Gastrocnemius medialis (tissue), 4 donors: ENCODE measurements at regions of chr12 and their contacts with region 1.

Region 1: GRCh38 chr12:3872800-3873636 is at the start of gene PARP11:
- DNase-seq: peak; percentile 95 to 96
- ATAC-seq: peak; percentile 99
- H3K4me3 ChIP-seq: peak within 1 kb of the TSS; percentile 58 to 79 (median 72)
- H3K27ac ChIP-seq: peak within 1 kb of the TSS; percentile 87 to 95 (median 92)
- H3K4me1 ChIP-seq: peaks cover 9 to 21% of the 10 kb centered on the region in 2 donors
- H3K27me3 ChIP-seq: peaks cover 0 to 5% (median 0%) of the 10 kb centered on the region in 3 donors
- CTCF ChIP-seq: no peak
- POLR2A ChIP-seq: peak; percentile 34 to 43
- total RNA-seq, gene PARP11: 0.53 to 2.4 (median 1.2) TPM

Region 2: DNA sequence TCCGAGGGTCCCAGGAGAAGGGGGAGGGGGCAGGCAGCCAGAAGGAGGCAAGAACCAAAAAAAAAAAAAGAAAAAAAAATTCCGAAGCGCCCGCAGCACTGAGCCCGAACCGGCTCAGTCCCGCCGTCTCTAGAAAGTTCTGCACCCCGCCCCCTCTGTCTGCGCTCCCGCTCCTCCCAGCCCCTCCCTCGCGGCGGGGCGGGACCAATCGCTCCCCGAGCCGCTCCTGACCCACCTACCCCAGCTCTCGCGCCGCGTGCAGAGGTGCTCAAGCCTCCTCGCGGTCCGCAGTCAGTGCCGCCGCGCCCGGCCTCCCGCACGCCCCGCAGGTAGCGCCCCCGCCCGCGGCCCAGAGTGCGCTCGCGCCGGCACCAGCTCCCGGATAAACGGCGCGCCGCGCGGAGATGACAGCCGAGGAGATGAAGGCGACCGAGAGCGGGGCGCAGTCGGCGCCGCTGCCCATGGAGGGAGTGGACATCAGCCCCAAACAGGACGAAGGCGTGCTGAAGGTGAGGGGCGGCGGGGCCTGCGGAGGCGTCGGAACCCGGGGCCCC is 1078.2 kb before region 1 on chr12 and contains the start of gene FKBP4:
- in situ Hi-C with region 1: no loop called
- intact Hi-C with region 1: loop called (anchors 10 kb)
- DNase-seq: peak; percentile 87 to 90
- ATAC-seq: peak; percentile 84
- H3K4me3 ChIP-seq: peak within 1 kb of the TSS; percentile 72 to 84 (median 78)
- H3K27ac ChIP-seq: peak within 1 kb of the TSS; percentile 86 to 92 (median 88)
- H3K4me1 ChIP-seq: peaks cover 21 to 22% of the 10 kb centered on the region in 2 donors
- H3K27me3 ChIP-seq: no peaks in the 10 kb centered on the region
- CTCF ChIP-seq: peak in 1 of 5 experiments; percentile 12
- POLR2A ChIP-seq: peak; percentile 96 to 98
- total RNA-seq, gene FKBP4: 41.9 to 96.0 (median 53.0) TPM

Region 3: DNA sequence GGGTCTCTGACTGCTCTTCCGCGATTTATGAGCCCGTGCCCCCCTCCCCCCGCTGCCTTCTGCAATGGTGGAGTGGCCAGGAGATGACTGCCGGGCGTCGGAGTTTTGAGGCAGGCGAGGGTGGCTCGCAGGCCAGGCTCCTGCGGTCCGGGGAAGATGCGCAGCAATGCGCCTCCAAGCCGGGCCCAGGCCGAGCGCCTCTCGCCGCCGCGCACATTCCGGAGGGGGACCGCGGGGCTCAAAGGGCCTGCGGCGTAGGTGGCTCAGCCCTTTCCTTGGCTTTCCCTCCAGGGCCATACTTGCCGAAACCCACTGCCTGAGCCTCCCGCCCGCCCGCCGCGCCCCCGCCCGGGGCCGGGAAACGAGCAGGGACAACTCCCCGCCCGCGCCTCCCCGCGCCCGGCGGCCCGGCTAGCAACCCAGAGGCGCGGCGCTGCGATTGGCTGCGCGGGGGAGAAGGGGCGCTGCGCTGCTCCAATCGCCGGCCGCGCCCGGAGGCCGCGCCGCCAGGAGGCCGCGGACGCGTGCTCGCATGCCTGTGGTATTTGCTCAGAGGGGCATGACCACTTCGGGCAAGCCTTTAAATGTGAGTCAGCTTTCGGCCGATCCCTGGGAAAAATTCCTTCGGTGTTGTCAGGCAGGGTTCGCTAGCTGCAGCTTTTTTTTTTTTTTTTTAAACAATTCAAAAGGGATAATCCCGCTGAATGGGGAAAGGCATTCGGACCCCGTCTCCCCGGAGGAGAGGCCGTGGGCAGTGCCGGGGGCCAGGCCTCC is 158.1 kb after region 1 on chr12:
- in situ Hi-C with region 1: no loop called
- intact Hi-C with region 1: loop called (anchors 5 kb)
- DNase-seq: peak; percentile 75 to 77
- ATAC-seq: peak; percentile 92 to 96
- H3K4me3 ChIP-seq: peak overlapping the region; percentile 53 to 65 (median 59)
- H3K27ac ChIP-seq: peak overlapping the region; percentile 42 to 65 (median 61)
- H3K4me1 ChIP-seq: peaks cover 0 to 3% of the 10 kb centered on the region in 2 donors
- H3K27me3 ChIP-seq: peaks cover 0 to 6% (median 0%) of the 10 kb centered on the region in 3 donors
- CTCF ChIP-seq: peak in 1 of 5 experiments; percentile 5
- POLR2A ChIP-seq: peak; percentile 46 to 66

Region 4: DNA sequence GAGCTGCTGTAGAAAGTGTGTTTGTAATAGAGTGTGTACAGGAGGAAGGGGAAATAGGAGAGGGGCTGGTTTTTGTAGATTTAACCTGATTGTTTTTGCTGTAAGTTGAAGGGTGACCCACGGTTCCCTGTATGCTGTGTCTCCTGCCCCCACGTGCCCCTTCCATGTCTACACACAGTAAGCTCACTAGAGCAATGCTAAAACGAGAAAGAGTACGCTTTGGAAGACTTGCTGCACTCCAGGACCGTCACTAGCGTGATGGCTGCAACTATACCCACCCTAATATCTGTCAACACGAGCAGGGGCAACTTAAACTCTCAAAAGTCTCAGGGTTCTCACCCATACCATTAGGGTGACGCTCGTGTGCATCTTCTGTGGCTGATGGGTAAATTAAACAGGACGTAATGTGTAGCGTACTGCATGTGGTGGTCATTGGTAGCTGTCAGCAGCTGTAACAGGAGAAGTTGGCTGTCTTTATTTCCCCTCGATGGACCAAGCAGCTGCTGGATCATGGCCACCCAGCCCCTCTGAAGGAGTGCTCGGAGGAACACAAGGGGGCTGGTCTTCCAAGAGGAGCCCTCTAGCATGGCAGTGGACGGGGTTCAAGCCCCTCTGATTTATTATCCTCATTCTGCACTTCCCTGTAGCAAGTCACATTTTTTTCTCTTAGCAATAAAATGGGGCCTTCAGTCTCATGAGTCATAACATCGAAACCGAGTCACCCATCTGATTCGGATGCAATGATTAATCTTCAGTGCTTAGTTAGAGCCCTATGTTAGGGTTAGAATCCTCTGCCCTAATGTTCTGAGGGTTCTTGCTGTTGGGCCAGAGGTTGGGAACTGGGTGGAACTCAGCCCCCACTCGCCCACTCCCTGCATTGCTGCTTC is 414.6 kb after region 1 on chr12:
- in situ Hi-C with region 1: loop called in 1 of 4 experiments (anchors 10 kb)
- intact Hi-C with region 1: no loop called
- DNase-seq: no peak
- ATAC-seq: no peak
- H3K4me3 ChIP-seq: no peak overlapping the region
- H3K27ac ChIP-seq: no peak overlapping the region
- H3K4me1 ChIP-seq: no peaks in the 10 kb centered on the region
- H3K27me3 ChIP-seq: peaks cover 3 to 12% (median 9%) of the 10 kb centered on the region in 3 donors
- CTCF ChIP-seq: no peak
- POLR2A ChIP-seq: no peak

Region 5: DNA sequence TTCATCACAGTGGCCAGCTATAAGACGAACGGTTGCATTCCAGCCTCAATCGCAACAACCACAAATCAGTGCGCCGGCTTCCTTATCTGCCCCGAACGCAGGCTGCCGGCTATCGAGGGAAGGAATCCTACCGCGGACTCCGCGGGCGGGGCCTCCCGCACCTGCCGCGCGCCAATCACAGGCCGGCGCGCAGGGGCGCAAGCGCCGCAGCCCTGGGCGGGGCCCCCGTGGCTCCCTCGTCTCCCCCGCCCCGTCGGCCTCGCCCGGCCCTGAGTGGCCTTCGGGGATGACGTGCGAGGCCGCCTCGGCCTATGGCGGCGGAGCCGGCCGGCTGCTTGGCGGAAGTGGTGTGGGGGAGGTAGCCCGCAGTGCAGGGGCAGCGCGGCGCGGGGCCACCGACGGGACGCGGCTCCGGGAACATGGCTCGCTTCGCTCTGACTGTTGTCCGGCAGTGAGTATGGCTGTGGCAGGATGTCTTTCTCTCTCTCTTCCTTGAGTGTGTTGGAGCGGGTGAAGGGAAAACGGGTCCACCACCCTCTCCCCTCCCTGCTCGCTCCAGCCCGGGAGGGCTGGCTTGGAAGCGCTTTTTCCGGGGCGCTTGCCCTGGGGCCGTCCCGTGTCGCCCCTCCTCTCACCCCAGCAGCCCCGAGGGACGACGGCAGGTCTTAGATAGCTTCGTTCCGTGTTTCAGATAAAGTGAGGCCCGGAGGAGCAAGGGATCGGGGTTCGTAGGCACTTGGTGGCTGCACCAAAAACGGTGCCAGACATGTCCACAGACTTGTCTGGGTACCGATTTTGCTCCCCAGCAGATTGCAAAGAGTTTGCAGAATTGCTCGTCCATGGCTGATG is 448.1 kb after region 1 on chr12 and contains the start of gene TIGAR:
- in situ Hi-C with region 1: no loop called
- intact Hi-C with region 1: loop called (anchors 5 kb)
- DNase-seq: peak; percentile 87 to 91
- ATAC-seq: peak; percentile 92 to 96
- H3K4me3 ChIP-seq: peak within 1 kb of the TSS; percentile 84 to 94 (median 92)
- H3K27ac ChIP-seq: peak within 1 kb of the TSS; percentile 88 to 95 (median 92)
- H3K4me1 ChIP-seq: peaks cover 13 to 19% of the 10 kb centered on the region in 2 donors
- H3K27me3 ChIP-seq: no peaks in the 10 kb centered on the region
- CTCF ChIP-seq: no peak
- POLR2A ChIP-seq: peak; percentile 91
- total RNA-seq, gene TIGAR: 4.4 to 8.3 (median 6.7) TPM

Region 6: DNA sequence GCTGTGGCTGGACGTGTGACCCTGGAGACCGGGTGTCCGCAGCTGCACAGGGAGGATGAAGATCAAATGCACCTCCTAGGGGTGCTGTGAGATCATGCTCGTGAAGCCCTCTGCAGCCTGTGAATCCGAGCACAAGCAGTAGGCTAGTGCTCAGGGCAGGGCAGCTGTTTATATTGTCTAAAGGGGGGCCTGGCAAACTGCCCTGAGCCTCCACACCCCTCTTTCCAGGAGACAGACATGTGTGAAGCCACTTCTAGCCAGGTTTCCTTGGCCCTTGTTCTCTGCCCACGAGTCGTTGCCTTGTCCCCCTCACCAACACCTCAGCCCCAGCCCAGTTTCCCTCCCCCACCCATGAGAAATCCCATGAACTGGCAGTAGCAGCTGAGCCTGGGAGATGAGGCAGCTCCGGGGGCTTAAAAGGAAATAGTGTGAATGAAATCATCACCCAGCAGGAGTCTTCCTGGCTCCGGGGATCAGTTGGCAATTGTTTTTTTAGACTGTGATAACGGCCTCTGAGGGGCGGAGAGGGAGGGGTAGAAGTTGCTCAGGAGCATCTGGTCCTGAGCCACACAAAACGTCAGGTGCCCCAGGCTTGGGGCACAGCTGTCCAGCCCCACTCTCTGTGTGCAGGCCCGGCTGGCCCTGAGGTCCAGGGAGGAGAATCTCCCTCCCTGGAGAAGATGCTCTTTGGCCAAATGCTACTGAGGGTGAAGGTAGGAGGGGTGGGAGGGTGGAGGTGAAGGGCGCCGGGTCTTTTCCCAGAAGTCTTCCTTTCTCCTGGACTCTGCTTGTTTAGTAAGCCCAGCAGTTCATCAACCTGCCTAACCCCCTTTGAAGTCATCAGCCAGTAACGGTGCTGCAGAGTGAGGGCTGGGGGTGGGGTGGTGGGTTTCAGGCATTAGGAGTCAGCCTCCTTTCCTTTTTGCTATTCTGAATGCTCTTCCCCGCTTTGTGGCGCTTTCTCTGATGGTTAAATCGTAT is 568.6 kb after region 1 on chr12:
- in situ Hi-C with region 1: no loop called
- intact Hi-C with region 1: loop called (anchors 10 kb)
- DNase-seq: peak in 1 of 2 donors; percentile 33
- ATAC-seq: peak in 1 of 2 donors; percentile 34
- H3K4me3 ChIP-seq: peak overlapping the region in 1 of 4 donors; percentile 2
- H3K27ac ChIP-seq: peak overlapping the region; percentile 33 to 88 (median 66)
- H3K4me1 ChIP-seq: peaks cover 8 to 53% of the 10 kb centered on the region in 2 donors
- H3K27me3 ChIP-seq: no peaks in the 10 kb centered on the region
- CTCF ChIP-seq: no peak
- POLR2A ChIP-seq: no peak

Region 7: DNA sequence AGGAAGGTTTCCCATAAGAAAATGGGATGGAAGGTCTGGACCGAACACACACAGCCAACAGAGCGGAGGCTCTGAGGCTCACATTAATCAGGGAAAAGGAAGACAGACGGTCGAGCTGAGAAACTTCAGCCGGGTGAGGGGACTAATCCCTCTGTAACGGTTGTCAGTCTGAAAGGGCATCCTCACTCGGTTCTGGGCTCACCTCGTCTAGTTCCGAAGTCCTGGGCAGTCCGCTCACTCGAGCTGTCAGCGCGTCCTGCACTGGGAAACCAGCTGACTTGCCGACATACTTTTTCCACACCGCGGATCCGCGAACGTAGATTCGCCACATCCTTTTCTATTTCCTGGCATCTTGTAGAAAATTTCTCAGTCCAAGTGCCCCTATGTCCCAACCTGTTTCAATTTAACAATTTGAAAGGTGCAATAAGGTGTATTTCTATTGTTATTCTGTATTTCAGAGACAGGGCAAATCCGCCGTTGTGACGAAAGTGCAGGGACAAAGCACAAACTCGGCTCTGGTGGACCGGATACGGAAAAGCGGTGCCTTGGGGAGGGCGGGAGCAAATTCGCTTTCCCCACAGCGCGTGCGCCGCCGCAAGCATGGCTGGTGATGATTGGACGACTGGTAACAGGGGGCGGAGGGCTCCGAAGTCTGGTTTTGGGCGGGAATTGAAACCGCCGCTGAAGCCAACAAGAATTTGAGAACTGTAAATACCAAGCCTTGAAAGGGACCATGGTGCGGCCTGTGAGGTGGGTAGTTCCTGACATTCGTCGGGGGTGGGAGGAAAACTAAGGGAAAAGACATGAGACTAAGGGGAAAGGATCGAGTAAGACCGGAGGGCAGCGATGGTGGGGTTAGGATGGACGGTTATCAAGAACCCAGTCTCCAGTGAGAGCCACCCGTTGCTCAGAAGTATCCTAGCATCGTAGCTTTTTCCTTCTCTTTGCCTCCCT is 665.5 kb after region 1 on chr12 and contains the start of gene RAD51AP1:
- in situ Hi-C with region 1: no loop called
- intact Hi-C with region 1: loop called (anchors 5 kb)
- DNase-seq: peak; percentile 87 to 90
- ATAC-seq: peak; percentile 99
- H3K4me3 ChIP-seq: peak within 1 kb of the TSS; percentile 55 to 92 (median 76)
- H3K27ac ChIP-seq: peak within 1 kb of the TSS; percentile 86 to 94 (median 92)
- H3K4me1 ChIP-seq: peaks cover 15 to 16% of the 10 kb centered on the region in 2 donors
- H3K27me3 ChIP-seq: no peaks in the 10 kb centered on the region
- CTCF ChIP-seq: no peak
- POLR2A ChIP-seq: peak; percentile 35 to 51
- total RNA-seq, gene RAD51AP1: 0.65 to 1.7 (median 1.7) TPM in 3 of 4 donors, not detected in the other

Region 8: DNA sequence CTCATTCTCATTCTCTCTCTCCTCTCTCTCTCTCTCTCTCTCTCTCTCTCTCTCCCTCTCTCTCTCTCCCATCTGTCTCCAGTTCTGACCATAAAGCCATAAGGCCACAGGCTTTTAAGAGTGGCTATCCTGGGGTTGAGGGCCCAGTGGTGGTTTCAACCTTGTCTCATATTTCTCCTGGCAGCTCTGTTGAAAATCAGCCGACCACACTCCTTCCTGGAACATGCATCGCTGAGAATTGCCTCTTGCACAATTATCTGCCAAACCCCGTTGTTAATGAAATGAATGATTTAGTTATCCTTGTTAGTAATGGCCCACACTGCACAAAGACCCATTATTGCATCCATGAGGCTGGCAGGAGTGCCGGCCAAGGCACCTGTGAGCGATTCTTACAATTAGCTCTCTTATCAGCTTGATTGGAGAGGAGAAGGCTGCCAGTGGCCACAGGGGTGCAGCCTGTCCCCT is 1140.3 kb after region 1 on chr12:
- in situ Hi-C with region 1: no loop called
- intact Hi-C with region 1: no loop called
- DNase-seq: peak; percentile 38 to 54
- ATAC-seq: peak; percentile 68 to 70
- H3K4me3 ChIP-seq: no peak overlapping the region
- H3K27ac ChIP-seq: peak overlapping the region in 3 of 4 donors; percentile 41 to 72 (median 60)
- H3K4me1 ChIP-seq: peaks cover 27 to 34% of the 10 kb centered on the region in 2 donors
- H3K27me3 ChIP-seq: no peaks in the 10 kb centered on the region
- CTCF ChIP-seq: peak in 2 of 5 experiments; percentile 12 to 33
- POLR2A ChIP-seq: no peak